ENCODE measurements at regions of chr4 and their contacts with region 1.

Region 1: GRCh38 chr4:73788411-73788810 is 48.0 kb downstream of the CXCL8 start:
- DNase-seq: no peak
- ATAC-seq: no peak
- H3K4me3 ChIP-seq: no peak overlapping the region
- H3K27ac ChIP-seq: no peak overlapping the region
- H3K4me1 ChIP-seq: no peaks in the 10 kb centered on the region
- H3K27me3 ChIP-seq: peaks cover 10% of the 10 kb centered on the region
- CTCF ChIP-seq: no peak
- POLR2A ChIP-seq: no peak
- RAD21 ChIP-seq: no peak

Region 2: GRCh38 chr4:73803213-73803612 is 14.8 kb after region 1 on chr4:
- CTCF ChIA-PET with region 1: interaction called, 10 read pairs
- POLR2A ChIA-PET with region 1: no interaction called
- dilution Hi-C with region 1: no loop called
- in situ Hi-C with region 1: no loop called
- intact Hi-C with region 1: no loop called
- DNase-seq: no peak
- ATAC-seq: no peak
- H3K4me3 ChIP-seq: no peak overlapping the region
- H3K27ac ChIP-seq: no peak overlapping the region
- H3K4me1 ChIP-seq: no peaks in the 10 kb centered on the region
- H3K27me3 ChIP-seq: no peaks in the 10 kb centered on the region; the same call in 1 of the 2 replicates
- CTCF ChIP-seq: no peak
- POLR2A ChIP-seq: no peak
- RAD21 ChIP-seq: no peak

Region 3: GRCh38 chr4:73856518-73856917 is 68.1 kb after region 1 on chr4:
- CTCF ChIA-PET with region 1: no interaction called
- POLR2A ChIA-PET with region 1: no interaction called
- dilution Hi-C with region 1: no loop called
- in situ Hi-C with region 1: no loop called
- intact Hi-C with region 1: no loop called
- DNase-seq: no peak
- ATAC-seq: no peak
- H3K4me3 ChIP-seq: no peak overlapping the region
- H3K27ac ChIP-seq: no peak overlapping the region
- H3K4me1 ChIP-seq: peaks cover 3% of the 10 kb centered on the region; the same call in 1 of the 2 replicates
- H3K27me3 ChIP-seq: peaks cover 27% of the 10 kb centered on the region
- CTCF ChIP-seq: no peak
- POLR2A ChIP-seq: no peak
- RAD21 ChIP-seq: no peak

Region 4: GRCh38 chr4:73869130-73870050 is 81.0 kb after region 1 on chr4 and contains the start of gene CXCL1:
- CTCF ChIA-PET with region 1: no interaction called
- POLR2A ChIA-PET with region 1: interaction called, 55 read pairs
- dilution Hi-C with region 1: no loop called
- in situ Hi-C with region 1: no loop called
- intact Hi-C with region 1: no loop called
- DNase-seq: no peak
- ATAC-seq: peak; percentile 87
- H3K4me3 ChIP-seq: peak within 1 kb of the TSS; percentile 55
- H3K27ac ChIP-seq: peak within 1 kb of the TSS; percentile 13; the same call in 1 of the 2 replicates
- H3K4me1 ChIP-seq: peaks cover 3% of the 10 kb centered on the region; the same call in 1 of the 2 replicates
- H3K27me3 ChIP-seq: peaks cover 51% of the 10 kb centered on the region
- CTCF ChIP-seq: 0 out of 2 replicates have a peak, but pooled peaks have one; percentile 10
- POLR2A ChIP-seq: no peak
- RAD21 ChIP-seq: 0 out of 2 replicates have a peak, but pooled peaks have one; percentile 11
- total RNA-seq, gene CXCL1: not detected in 2 replicates